Natural killer cell (primary cell): ENCODE measurements at regions of chr10 and their contacts with region 1.

Region 1: DNA sequence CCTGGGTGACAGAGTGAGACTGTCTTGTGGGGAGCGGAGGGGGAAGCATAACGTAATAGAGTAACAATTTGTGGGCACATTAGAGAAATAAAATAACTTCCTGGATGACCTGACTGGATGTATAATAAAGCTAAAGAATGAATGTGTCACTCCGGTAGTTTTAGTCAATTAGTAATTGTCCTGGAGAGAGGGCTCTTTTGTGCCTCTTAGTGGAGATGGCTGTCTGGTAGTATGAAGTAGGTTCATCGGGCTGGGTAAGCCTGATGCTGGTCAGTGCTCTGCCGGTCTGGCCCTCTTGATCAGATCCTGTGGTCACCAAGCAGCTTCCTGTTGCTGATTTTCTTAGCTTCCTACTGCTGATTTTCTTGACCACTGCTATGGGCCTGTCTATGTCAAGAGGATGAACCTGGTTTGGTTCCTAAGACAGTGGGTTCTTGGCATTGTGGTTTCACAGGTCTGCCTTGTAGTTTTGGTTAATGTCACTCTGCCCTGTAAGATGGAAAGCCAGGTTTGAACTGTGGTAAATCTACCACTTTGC is 34.1 kb downstream of the ZRANB1 start:
- DNase-seq: peak in 1 of 2 donors; percentile 47
- ATAC-seq: peak; percentile 75 to 88 (median 82)
- H3K4me3 ChIP-seq: no peak overlapping the region
- H3K4me3 Mint-ChIP-seq: peak overlapping the region; percentile 15
- H3K27ac ChIP-seq: no peak overlapping the region
- H3K27ac Mint-ChIP-seq: peak overlapping the region; percentile 37 to 56
- H3K4me1 ChIP-seq: peaks cover 29% of the 10 kb centered on the region
- H3K4me1 Mint-ChIP-seq: peaks cover 44 to 46% of the 10 kb centered on the region in 2 donors
- H3K27me3 ChIP-seq: no peaks in the 10 kb centered on the region
- H3K27me3 Mint-ChIP-seq: no peaks in the 10 kb centered on the region
- CTCF ChIP-seq: no peak

Region 2: GRCh38 chr10:124916585-124917427 is 59.2 kb before region 1 on chr10:
- intact Hi-C with region 1: loop called (anchors 5 kb)
- DNase-seq: peak; percentile 98
- ATAC-seq: peak; percentile 89 to 95 (median 92)
- H3K4me3 ChIP-seq: peak overlapping the region; percentile 68
- H3K4me3 Mint-ChIP-seq: peak overlapping the region; percentile 96
- H3K27ac ChIP-seq: peak overlapping the region; percentile 93
- H3K27ac Mint-ChIP-seq: peak overlapping the region; percentile 95
- H3K4me1 ChIP-seq: peaks cover 16% of the 10 kb centered on the region
- H3K4me1 Mint-ChIP-seq: peaks cover 36 to 40% of the 10 kb centered on the region in 2 donors
- H3K27me3 ChIP-seq: no peaks in the 10 kb centered on the region
- H3K27me3 Mint-ChIP-seq: peaks cover 8 to 12% of the 10 kb centered on the region in 2 donors
- CTCF ChIP-seq: no peak